ENCODE measurements at regions of chr17 and their contacts with region 1.

Region 1: GRCh38 chr17:39872751-39873150 is 4.7 kb downstream of the ZPBP2 start:
- DNase-seq: peak; percentile 11
- H3K4me3 ChIP-seq: no peak overlapping the region
- H3K27ac ChIP-seq: no peak overlapping the region
- H3K27me3 ChIP-seq: peaks cover 21% of the 10 kb centered on the region
- CTCF ChIP-seq: peak; percentile 57

Region 2: DNA sequence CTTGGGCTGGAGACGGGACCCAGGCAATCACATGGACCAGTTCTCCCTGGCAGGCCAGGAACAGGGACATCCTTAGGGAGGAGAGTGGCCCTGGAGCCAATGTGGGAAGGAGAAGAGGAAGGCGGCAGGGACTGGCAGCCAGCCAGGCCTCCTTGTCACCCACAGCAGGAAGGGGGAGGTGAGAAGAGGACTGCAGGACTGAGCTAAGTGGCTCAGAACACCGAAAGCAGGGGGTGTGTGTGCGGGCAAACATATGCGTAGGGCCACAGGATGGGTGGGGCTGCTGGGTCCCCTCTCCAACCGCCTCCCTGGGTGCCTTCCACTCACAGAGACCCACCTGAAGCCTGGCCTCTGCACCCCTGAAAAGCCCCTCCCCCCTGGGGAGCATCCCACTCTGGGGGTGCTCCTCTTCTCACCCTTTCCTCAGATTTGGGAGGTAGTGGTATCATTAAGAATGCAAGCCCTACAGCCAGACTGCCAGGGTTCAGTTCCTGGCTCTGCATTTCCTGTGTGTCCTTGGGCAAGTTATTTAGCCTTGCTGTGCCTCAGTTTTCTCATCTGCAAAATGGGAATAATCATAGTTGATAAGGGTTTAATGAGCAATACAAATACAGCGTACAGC is 196.4 kb before region 1 on chr17:
- CTCF ChIA-PET with region 1: no interaction called
- POLR2A ChIA-PET with region 1: no interaction called
- DNase-seq: no peak
- H3K4me3 ChIP-seq: no peak overlapping the region
- H3K27ac ChIP-seq: no peak overlapping the region
- H3K27me3 ChIP-seq: peaks cover 4% of the 10 kb centered on the region
- CTCF ChIP-seq: no peak

Region 3: DNA sequence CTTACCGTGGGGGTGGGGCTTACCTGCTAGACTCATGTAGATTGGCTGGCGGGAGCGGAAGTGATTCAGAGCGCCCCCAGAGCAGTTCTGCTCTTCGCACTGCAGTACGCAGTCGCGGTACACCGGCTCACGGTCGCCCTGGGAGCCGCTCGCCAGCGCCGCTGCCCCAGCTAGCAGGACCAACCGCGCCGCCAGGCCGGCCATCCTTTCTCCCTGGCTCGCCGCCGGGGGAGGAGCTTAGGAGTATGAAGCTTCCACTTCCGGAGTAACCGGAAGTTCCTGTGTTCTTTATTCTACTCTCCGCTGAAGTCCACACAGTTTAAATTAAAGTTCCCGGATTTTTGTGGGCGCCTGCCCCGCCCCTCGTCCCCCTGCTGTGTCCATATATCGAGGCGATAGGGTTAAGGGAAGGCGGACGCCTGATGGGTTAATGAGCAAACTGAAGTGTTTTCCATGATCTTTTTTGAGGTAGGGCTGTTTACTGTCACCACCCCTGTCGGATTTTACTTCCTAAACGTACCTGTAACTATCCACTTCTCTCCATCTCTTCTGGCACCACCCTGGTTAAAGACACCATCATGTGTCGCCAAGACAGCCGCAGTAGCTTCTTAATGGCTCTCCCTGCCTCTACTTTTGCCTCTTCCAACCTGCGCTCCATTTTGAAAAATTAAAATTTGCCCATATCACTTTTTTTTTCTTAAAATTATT is 184.8 kb before region 1 on chr17 and contains the start of gene PGAP3:
- CTCF ChIA-PET with region 1: no interaction called
- POLR2A ChIA-PET with region 1: no interaction called
- DNase-seq: peak; percentile 66
- H3K4me3 ChIP-seq: peak within 1 kb of the TSS; percentile 83
- H3K27ac ChIP-seq: peak within 1 kb of the TSS; percentile 85
- H3K27me3 ChIP-seq: no peaks in the 10 kb centered on the region
- CTCF ChIP-seq: no peak
- polyA plus RNA-seq, gene PGAP3: 9.6 and 13.9 TPM in 2 replicates

Region 4: DNA sequence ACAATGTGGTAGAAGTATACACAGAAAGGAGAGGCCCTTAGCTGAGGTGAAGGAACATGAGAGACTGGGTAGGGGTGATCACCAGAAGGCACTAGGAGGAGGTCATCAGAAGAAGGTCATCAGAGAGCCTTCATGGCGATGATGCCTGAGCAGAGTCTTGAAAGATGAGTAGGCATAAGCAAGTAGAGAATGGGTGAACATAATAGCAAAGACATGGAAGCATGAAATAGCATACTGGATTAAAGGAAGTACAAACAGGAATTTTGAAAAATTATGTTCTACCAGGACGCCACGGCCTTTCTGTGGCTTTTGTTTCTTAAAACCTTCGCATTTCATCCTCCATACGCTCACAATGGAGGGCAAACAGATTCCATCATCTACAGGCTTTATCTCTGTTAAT is 11.5 kb before region 1 on chr17:
- CTCF ChIA-PET with region 1: no interaction called
- POLR2A ChIA-PET with region 1: no interaction called
- DNase-seq: no peak
- H3K4me3 ChIP-seq: no peak overlapping the region
- H3K27ac ChIP-seq: no peak overlapping the region
- H3K27me3 ChIP-seq: peaks cover 42% of the 10 kb centered on the region
- CTCF ChIP-seq: no peak

Region 5: GRCh38 chr17:39889200-39889599 is 16.4 kb after region 1 on chr17:
- CTCF ChIA-PET with region 1: interaction called, 10 read pairs
- POLR2A ChIA-PET with region 1: no interaction called
- DNase-seq: no peak
- H3K4me3 ChIP-seq: no peak overlapping the region
- H3K27ac ChIP-seq: no peak overlapping the region
- H3K27me3 ChIP-seq: peaks cover 38% of the 10 kb centered on the region
- CTCF ChIP-seq: no peak

Region 6: DNA sequence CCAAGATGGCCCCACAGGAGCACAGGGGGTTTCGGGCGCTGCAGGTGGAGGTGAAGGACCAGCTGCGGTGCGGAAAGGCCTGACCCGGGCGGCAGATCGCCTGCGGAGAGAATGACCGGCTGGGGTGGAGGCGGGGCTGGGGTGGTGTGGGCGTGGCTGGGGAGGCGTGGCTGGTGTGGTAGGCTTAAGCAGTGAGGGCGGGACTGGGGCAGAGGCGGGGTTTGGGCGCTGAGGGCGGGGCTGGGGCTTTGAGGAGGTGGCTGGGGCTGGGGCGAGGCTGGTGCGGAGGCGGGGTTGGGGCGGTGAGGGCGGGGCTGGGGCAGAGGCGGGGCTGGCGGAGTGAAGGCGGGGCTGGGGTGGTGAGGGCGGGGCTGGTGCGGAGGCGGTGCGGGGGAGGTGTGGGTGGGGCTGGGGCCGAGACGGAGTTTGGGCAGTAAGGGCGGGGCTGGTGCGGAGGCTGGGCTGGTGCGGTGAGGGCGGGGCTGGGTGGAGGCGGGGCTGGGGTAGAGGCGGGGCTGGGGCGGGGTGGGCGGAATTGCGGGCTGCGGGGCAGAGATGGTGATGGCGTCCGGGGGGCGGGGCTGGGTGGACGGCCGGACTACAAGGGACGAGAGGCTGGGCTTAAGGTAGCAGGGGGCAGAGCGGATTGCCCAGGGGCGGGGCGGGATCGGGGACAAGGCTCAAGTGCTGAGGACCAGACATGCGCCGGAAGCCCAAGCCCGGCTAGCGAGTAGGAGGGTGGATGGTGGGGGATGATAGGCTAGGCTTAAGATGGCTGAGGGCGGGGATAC is 80.1 kb after region 1 on chr17:
- CTCF ChIA-PET with region 1: interaction called, 12 read pairs
- POLR2A ChIA-PET with region 1: no interaction called
- DNase-seq: peak; percentile 82
- H3K4me3 ChIP-seq: peak overlapping the region; percentile 57
- H3K27ac ChIP-seq: peak overlapping the region; percentile 2
- H3K27me3 ChIP-seq: peaks cover 10% of the 10 kb centered on the region
- CTCF ChIP-seq: no peak

Region 7: GRCh38 chr17:40026816-40027613 is 154.3 kb after region 1 on chr17:
- CTCF ChIA-PET with region 1: interaction called, 12 read pairs
- POLR2A ChIA-PET with region 1: no interaction called
- DNase-seq: peak; percentile 62
- H3K4me3 ChIP-seq: no peak overlapping the region
- H3K27ac ChIP-seq: peak overlapping the region; percentile 21
- H3K27me3 ChIP-seq: no peaks in the 10 kb centered on the region
- CTCF ChIP-seq: peak; percentile 90

Measured in AG04450 (cell line).